ENCODE measurements at regions of chr3 and their contacts with region 1.

Region 1: DNA sequence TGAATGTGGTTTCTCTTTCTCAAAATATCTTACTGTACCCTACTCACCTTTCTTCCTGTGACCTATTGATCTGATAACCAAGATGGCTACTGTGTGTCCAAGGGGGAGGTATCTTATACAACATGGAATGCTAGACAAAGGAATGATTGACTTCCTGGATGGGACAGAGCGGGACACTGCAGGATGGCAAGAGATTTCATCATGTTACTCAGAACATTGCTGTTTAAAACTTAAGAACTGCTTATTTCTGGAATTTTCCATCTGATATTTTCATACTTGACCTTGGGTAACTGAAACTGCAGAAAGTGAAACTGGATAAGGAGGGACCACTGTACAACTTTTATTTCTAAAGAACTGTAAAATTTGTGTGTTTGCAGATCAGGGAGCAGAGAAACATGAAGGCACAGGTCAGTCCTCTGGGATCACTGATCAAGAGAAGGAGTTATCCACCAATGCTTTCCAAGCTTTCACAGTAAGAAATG is 18.5 kb downstream of the CNOT10 start:
- DNase-seq: no peak
- ATAC-seq: peak; percentile 45
- H3K4me3 ChIP-seq: no peak overlapping the region
- H3K27ac ChIP-seq: peak overlapping the region; percentile 55
- H3K4me1 ChIP-seq: peaks cover 12% of the 10 kb centered on the region
- H3K27me3 ChIP-seq: no peaks in the 10 kb centered on the region
- CTCF ChIP-seq: no peak
- EP300 ChIP-seq: no peak
- POLR2A ChIP-seq: no peak
- RAD21 ChIP-seq: no peak

Region 2: GRCh38 chr3:32667122-32667521 is 36.4 kb before region 1 on chr3:
- CTCF ChIA-PET with region 1: no interaction called
- POLR2A ChIA-PET with region 1: no interaction called
- RAD21 ChIA-PET with region 1: no interaction called
- SMC1A ChIA-PET with region 1: no interaction called
- in situ Hi-C with region 1: no loop called
- intact Hi-C with region 1: no loop called
- DNase-seq: no peak
- ATAC-seq: no peak
- H3K4me3 ChIP-seq: no peak overlapping the region
- H3K27ac ChIP-seq: no peak overlapping the region
- H3K4me1 ChIP-seq: no peaks in the 10 kb centered on the region
- H3K27me3 ChIP-seq: peaks cover 0 to 2% of the 10 kb centered on the region in 2 experiments; a peak in 2 of 4 replicates
- CTCF ChIP-seq: no peak
- EP300 ChIP-seq: no peak
- POLR2A ChIP-seq: no peak
- RAD21 ChIP-seq: no peak

Region 3: DNA sequence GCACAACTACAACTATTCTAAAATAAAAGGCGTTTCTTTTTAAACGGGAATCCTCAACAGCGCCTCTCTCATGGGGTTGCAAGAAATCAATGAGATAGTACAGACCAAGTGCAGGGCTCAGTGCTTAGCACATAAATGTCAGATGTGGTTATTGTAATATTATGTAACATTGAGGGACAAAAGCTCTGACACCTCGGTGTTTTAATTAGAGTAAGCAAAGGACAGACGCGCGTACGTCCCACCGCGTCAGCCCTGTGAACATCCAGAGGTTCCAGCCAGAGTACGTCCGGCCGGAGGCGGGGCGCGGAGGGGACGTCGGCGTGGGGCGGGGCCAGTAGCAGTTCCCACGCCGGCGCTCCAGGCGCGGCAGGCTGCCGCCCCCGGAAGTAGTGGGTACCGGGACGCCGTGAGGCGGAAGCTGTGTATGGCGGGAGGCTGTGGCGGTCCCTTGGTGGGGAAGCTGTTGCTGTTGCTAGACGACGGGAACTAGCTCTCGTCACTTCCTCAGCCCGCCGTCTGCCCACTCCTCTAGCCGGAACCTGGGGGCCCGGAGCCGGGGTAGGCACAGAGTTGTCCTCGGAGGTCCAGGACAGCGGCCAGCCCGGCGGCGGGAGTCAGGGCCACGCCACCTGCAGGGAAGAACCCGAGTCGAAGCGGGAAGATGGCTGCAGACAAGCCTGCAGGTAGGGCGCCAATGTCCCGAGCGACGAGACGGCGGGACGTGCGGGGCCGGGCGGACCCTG is 18.6 kb before region 1 on chr3 and contains the start of gene CNOT10:
- CTCF ChIA-PET with region 1: interaction called, 8 read pairs
- POLR2A ChIA-PET with region 1: interaction called, 4 read pairs
- RAD21 ChIA-PET with region 1: interaction called, 4 read pairs
- SMC1A ChIA-PET with region 1: interaction called, 13 read pairs
- in situ Hi-C with region 1: no loop called
- intact Hi-C with region 1: no loop called
- DNase-seq: peak; percentile 81
- ATAC-seq: peak; percentile 97
- H3K4me3 ChIP-seq: peak within 1 kb of the TSS; percentile 84
- H3K27ac ChIP-seq: peak within 1 kb of the TSS; percentile 76
- H3K4me1 ChIP-seq: peaks cover 4% of the 10 kb centered on the region
- H3K27me3 ChIP-seq: no peaks in the 10 kb centered on the region
- CTCF ChIP-seq: 0 out of 6 replicates have a peak, but pooled peaks of 2 of the 3 experiments have one; percentile 5 to 8
- EP300 ChIP-seq: peak in 1 of 2 experiments; percentile 37; a peak in 1 of 4 replicates
- POLR2A ChIP-seq: peak; percentile 87
- RAD21 ChIP-seq: no peak
- polyA plus RNA-seq, gene CNOT10: 18.2 to 34.6 TPM

Region 4: GRCh38 chr3:32797776-32798175 is 94.2 kb after region 1 on chr3:
- CTCF ChIA-PET with region 1: no interaction called
- POLR2A ChIA-PET with region 1: no interaction called
- RAD21 ChIA-PET with region 1: no interaction called
- SMC1A ChIA-PET with region 1: no interaction called
- in situ Hi-C with region 1: no loop called
- intact Hi-C with region 1: no loop called
- DNase-seq: no peak
- ATAC-seq: no peak
- H3K4me3 ChIP-seq: no peak overlapping the region
- H3K27ac ChIP-seq: no peak overlapping the region
- H3K4me1 ChIP-seq: no peaks in the 10 kb centered on the region
- H3K27me3 ChIP-seq: no peaks in the 10 kb centered on the region
- CTCF ChIP-seq: no peak
- EP300 ChIP-seq: no peak
- POLR2A ChIP-seq: no peak
- RAD21 ChIP-seq: no peak